Transverse colon (tissue), 4 donors: ENCODE measurements at regions of chr2 and their contacts with region 1.

Region 1: DNA sequence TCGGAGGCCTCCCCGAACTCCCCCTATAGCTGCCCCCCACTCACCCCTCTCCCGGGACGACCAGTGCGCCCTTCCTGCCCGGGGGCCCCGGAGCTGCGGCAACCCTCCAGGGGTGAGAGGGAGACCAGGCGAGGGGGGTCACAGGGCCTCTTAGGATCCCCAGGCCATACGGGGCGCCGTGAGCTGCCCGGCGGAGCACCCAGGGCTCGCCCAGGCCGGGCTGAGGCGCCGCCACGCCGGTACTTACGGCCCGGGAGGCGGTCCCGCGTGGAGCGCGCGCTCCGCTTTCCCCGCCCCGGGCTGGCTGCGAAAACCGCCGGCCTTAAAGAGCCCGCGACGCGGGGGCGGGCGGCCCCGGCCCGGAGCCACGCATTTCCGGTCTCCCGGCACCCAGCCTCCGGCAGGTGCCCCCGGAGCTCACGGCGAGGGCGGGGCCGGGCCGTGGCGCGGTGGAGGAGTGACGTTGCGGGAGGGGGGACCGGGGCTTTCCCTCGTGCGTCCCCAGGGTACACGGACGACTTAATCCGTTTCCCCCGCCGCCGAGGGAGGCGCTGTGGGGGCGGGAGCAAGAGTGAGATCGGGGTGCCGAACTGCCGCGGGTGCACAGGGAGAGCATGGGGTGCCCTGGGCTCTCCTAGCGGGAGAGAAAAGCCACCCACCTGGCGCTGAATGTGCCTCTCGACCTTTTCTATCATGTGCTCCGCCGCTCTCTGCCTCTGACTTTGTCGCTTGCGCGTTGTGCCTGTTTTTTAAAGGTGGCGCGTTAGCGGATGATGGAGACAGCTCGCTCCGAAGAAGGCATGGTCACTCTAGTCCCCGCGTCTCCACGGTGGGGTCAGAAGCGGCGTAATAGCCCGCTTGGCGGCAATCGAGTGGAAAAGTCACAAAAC is at the start of gene METTL21A:
- DNase-seq: peak; percentile 94
- H3K4me3 ChIP-seq: peak within 1 kb of the TSS; percentile 39 to 87 (median 73)
- H3K27ac ChIP-seq: peak within 1 kb of the TSS; percentile 91 to 99 (median 94)
- H3K4me1 ChIP-seq: peaks cover 8 to 30% (median 16%) of the 10 kb centered on the region in 4 donors
- H3K27me3 ChIP-seq: no peaks in the 10 kb centered on the region
- CTCF ChIP-seq: peak in 4 of 5 experiments; percentile 35 to 61 (median 44)
- EP300 ChIP-seq: peak; percentile 8
- POLR2A ChIP-seq: peak; percentile 41
- total RNA-seq, gene METTL21A: 0.60 to 25.4 (median 17.7) TPM

Region 2: GRCh38 chr2:207529330-207530159 is 95.7 kb before region 1 on chr2 and contains the start of gene CREB1:
- in situ Hi-C with region 1: loop called in 2 of 4 experiments (anchors 10 kb)
- intact Hi-C with region 1: loop called (anchors 10 kb)
- DNase-seq: peak; percentile 99
- H3K4me3 ChIP-seq: peak within 1 kb of the TSS; percentile 63 to 90 (median 83)
- H3K27ac ChIP-seq: peak within 1 kb of the TSS; percentile 97 to 99 (median 98)
- H3K4me1 ChIP-seq: peaks cover 24 to 50% (median 37%) of the 10 kb centered on the region in 4 donors
- H3K27me3 ChIP-seq: no peaks in the 10 kb centered on the region
- CTCF ChIP-seq: no peak
- EP300 ChIP-seq: peak; percentile 79
- POLR2A ChIP-seq: peak; percentile 99
- total RNA-seq, gene CREB1: 41.9 to 56.1 (median 51.9) TPM

Region 3: GRCh38 chr2:207692206-207693065 is 67.2 kb after region 1 on chr2:
- in situ Hi-C with region 1: no loop called
- intact Hi-C with region 1: no loop called
- DNase-seq: peak; percentile 58
- H3K4me3 ChIP-seq: no peak overlapping the region
- H3K27ac ChIP-seq: no peak overlapping the region
- H3K4me1 ChIP-seq: peaks cover 0 to 13% (median 0%) of the 10 kb centered on the region in 4 donors
- H3K27me3 ChIP-seq: no peaks in the 10 kb centered on the region
- CTCF ChIP-seq: peak; percentile 23 to 40 (median 32)
- EP300 ChIP-seq: no peak
- POLR2A ChIP-seq: no peak

Region 4: GRCh38 chr2:207710814-207711740 is 85.8 kb after region 1 on chr2 and contains the start of gene CCNYL1:
- in situ Hi-C with region 1: no loop called
- intact Hi-C with region 1: loop called (anchors 5 kb)
- DNase-seq: peak; percentile 99
- H3K4me3 ChIP-seq: peak within 1 kb of the TSS; percentile 78 to 91 (median 86)
- H3K27ac ChIP-seq: peak within 1 kb of the TSS; percentile 94 to 98 (median 97)
- H3K4me1 ChIP-seq: peaks cover 6 to 27% (median 13%) of the 10 kb centered on the region in 4 donors
- H3K27me3 ChIP-seq: no peaks in the 10 kb centered on the region
- CTCF ChIP-seq: peak in 4 of 5 experiments; percentile 22 to 65 (median 42)
- EP300 ChIP-seq: no peak
- POLR2A ChIP-seq: peak; percentile 76
- total RNA-seq, gene CCNYL1: 30.0 to 99.5 (median 31.7) TPM

Region 5: GRCh38 chr2:207974216-207974605 is 348.9 kb after region 1 on chr2:
- in situ Hi-C with region 1: no loop called
- intact Hi-C with region 1: loop called (anchors 5 kb)
- DNase-seq: no peak
- H3K4me3 ChIP-seq: no peak overlapping the region
- H3K27ac ChIP-seq: no peak overlapping the region
- H3K4me1 ChIP-seq: peaks cover 11 to 27% (median 19%) of the 10 kb centered on the region in 4 donors
- H3K27me3 ChIP-seq: no peaks in the 10 kb centered on the region
- CTCF ChIP-seq: no peak
- EP300 ChIP-seq: no peak
- POLR2A ChIP-seq: no peak

Region 6: DNA sequence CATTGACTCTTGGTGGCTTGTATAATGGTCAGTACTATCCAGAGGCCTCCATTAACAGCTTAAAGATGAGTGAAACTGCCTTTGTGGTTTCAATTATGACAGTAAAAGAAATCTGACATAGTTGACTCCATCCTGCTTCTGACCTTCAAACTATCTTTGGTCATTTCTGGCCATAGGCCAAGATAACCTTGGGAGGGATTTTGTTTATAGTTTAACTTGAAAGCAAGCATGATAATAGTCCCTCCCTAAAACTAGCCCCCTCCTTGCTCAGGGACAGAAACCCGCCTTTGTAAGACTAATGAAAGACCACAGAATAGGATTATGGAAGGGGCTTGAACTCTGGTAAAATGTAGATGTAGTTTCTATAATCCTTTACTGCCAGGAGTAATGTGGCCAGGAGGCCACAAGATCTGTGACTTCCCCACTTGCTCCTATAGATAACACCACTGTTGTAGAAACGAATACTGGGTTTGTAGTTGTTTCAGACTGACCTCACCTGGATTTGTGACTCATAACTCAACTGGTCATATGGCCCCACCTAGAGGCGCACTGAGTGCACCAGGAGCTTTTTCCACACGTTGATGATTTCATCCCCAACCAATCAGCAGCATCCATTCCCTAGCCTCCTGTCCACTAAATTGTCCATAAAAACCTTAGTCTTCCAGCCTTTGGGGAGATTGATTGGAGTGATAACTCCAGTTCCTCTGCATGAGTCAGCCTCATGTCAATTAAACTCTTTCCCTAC is 408.7 kb after region 1 on chr2:
- in situ Hi-C with region 1: loop called in 1 of 4 experiments (anchors 10 kb)
- intact Hi-C with region 1: no loop called
- DNase-seq: peak; percentile 70
- H3K4me3 ChIP-seq: no peak overlapping the region
- H3K27ac ChIP-seq: no peak overlapping the region
- H3K4me1 ChIP-seq: no peaks in the 10 kb centered on the region
- H3K27me3 ChIP-seq: no peaks in the 10 kb centered on the region
- CTCF ChIP-seq: peak in 4 of 5 experiments; percentile 29 to 64 (median 43)
- EP300 ChIP-seq: no peak
- POLR2A ChIP-seq: no peak

Region 7: DNA sequence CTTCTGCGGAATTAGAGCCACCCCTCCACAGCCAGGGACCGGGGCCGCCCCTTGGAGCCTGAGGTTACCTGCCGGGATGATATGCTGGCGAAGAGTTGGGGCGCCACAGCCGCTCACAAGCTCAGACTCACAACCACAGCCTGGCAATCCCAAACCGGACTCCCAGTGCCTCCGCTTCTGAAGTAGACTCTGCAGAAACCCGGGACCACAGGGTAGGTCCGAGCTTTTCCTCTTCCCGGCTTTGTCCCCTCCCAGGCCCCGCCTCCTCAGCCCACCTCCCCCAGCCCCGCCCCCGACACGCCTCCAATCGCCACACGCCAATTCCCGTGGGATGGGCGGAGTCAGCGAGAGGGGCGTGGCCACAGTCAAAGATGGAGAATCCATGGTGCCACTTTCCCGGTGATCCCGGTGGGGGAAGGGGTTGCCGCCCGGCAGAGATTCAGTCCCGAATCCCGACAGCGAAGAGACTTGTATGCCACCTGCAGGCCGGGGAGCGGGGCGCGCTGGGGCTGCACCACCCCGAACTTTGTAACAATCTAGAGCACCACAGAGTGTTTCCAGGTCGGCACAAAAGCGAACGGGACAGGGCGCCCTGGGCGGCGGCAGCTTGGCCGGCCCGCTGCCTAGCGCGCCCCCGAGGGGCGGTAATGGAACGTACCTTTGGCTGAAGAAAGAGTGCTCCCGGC is 629.8 kb after region 1 on chr2 and contains the start of gene IDH1:
- in situ Hi-C with region 1: loop called in 1 of 4 experiments (anchors 25 kb)
- intact Hi-C with region 1: no loop called
- DNase-seq: peak; percentile 99
- H3K4me3 ChIP-seq: peak within 1 kb of the TSS; percentile 47 to 93 (median 80)
- H3K27ac ChIP-seq: peak within 1 kb of the TSS; percentile 85 to 92 (median 90)
- H3K4me1 ChIP-seq: peaks cover 0 to 48% (median 26%) of the 10 kb centered on the region in 4 donors
- H3K27me3 ChIP-seq: no peaks in the 10 kb centered on the region
- CTCF ChIP-seq: peak in 4 of 5 experiments; percentile 34 to 63 (median 49)
- EP300 ChIP-seq: no peak
- POLR2A ChIP-seq: peak; percentile 52
- total RNA-seq, gene IDH1: 47.9 to 164 (median 136) TPM